BJ (cell line): ENCODE measurements at regions of chr6 and their contacts with region 1.

Region 1: DNA sequence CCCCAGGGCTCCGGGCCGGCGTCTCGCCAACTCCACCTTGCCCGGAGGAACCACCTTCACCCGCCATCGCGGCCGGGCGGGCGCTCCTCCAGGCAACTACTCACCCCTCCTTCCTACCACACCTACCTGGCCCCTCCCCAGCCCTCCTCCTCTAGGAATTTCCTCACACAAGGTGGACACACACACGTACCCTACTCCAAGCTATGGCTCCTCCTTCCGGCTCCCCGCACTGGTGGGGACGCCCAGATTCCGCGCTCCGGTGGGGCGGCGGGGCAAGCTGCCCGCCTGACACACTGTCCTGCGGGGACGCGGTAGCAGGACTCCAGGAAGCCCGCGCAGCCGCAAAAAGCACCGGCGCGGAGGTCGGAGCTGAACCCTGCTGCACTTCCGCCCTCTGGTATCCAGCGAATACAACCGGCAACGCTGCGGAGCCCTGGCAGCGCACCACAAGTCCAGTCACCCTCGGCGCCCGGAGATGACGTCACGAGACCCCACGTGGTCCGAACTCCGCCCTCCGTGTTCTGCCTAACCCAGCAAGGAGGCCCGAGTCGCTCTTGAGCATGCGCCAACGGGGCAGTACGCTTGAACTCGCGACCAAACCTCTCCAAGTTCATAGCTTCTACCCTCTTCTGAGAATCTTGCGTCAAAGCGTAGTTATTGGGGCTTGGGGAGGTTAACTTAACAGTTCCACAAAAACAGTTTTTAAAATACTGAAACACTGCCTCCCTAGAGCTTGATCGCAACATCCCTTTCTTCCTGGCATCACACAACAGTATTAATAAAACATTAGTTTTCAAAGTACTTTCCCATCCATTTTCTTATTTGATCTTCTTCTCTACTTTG is at the start of gene ATG5:
- DNase-seq: peak; percentile 94
- H3K4me3 ChIP-seq: peak within 1 kb of the TSS; percentile 95
- H3K27me3 ChIP-seq: no peaks in the 10 kb centered on the region; the same call in 1 of the 2 replicates
- CTCF ChIP-seq: no peak; the same call in 1 of the 2 replicates
- polyA plus RNA-seq, gene ATG5: 18.6 and 35.7 TPM in 2 replicates

Region 2: DNA sequence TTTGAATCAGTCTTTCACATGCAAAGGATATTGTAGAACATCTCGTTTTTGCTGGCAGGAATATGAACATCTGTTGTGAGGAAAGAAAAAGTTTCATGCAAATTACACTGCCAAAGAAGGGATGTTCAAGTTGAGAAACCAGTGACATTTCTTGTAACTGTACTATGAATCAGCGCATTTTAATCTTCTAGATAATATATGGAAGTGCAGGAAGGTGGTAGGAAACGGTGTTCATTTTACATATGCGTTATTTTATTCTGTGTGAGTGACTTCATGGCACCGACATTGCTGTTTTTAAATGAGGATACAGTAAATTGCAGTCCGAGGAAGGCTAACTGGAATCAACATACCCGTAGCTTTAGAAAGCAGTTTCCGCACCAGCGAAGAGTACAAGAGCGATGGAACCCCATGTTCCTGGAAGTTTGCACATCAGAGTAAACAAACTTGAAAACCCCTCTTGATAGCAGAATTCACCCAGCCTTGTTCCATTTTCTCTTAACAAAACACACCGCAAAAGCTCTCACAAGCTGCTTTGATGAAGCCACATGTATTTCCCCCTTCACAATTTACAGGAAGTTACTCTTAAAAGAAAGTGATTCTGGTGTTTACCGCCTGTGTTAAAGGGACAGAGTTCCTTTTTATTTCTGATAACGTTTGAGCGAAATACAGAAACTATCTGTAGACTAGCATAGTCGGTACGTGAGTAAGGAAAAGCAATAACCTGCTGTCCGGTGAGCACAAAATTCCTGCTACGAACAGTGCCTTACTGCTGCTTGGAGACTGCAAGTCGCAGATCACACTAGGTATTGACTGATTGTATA is 227.9 kb before region 1 on chr6:
- CTCF ChIA-PET with region 1: no interaction called
- POLR2A ChIA-PET with region 1: no interaction called
- DNase-seq: no peak
- H3K4me3 ChIP-seq: peak overlapping the region; percentile 28
- H3K27me3 ChIP-seq: no peaks in the 10 kb centered on the region
- CTCF ChIP-seq: no peak

Region 3: DNA sequence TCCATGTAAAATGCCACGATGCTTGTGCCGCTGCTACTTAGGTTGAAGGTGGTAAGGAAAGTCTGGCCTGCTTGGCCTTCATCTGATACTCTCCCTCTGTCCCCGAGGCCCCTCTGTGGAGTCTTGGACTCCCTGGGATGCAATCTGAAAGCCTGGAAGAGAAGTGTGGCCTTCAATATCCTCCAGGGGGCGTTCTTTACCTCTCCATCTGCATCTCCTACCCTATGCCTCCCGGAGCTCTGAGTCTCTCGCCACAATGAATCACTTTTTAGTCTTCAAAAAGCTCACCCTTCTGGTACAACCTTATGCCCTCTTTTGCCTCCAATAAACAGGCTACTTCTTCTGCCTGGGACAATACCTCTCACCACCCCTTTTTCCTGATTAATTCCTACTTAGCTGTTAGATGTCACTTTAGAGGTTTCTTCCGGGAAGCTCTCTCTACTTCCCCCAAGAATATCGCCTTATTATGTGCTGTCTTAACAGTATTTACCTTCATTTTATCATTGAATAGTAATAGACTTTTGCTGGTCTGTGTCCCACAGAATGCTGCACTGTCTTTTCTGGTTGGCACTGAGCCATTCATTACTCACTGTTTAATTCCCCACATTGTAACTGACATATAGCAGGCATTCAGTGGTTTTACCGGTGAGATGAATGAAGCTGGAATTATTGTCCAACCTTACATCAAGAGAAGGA is 13.9 kb after region 1 on chr6:
- CTCF ChIA-PET with region 1: interaction called, 22 read pairs
- POLR2A ChIA-PET with region 1: no interaction called
- DNase-seq: peak; percentile 8
- H3K4me3 ChIP-seq: no peak overlapping the region
- H3K27me3 ChIP-seq: peaks cover 2% of the 10 kb centered on the region
- CTCF ChIP-seq: peak; percentile 87

Region 4: GRCh38 chr6:106377061-106377540 is 51.5 kb after region 1 on chr6:
- CTCF ChIA-PET with region 1: no interaction called
- POLR2A ChIA-PET with region 1: no interaction called
- DNase-seq: no peak
- H3K4me3 ChIP-seq: no peak overlapping the region
- H3K27me3 ChIP-seq: peaks cover 3% of the 10 kb centered on the region
- CTCF ChIP-seq: no peak